GM23248 (cell line): ENCODE measurements at regions of chr18 and their contacts with region 1.

Region 1: GRCh38 chr18:62001396-62001795 is 108.6 kb upstream of the RNF152 start:
- DNase-seq: no peak
- H3K4me3 ChIP-seq: no peak overlapping the region
- H3K27ac ChIP-seq: no peak overlapping the region
- H3K4me1 ChIP-seq: peaks cover 20% of the 10 kb centered on the region
- H3K27me3 ChIP-seq: no peaks in the 10 kb centered on the region

Region 2: GRCh38 chr18:61949946-61950345 is 51.5 kb before region 1 on chr18:
- in situ Hi-C with region 1: loop called (anchors 10 kb)
- DNase-seq: peak; percentile 48
- H3K4me3 ChIP-seq: no peak overlapping the region
- H3K27ac ChIP-seq: no peak overlapping the region
- H3K4me1 ChIP-seq: peaks cover 13% of the 10 kb centered on the region
- H3K27me3 ChIP-seq: no peaks in the 10 kb centered on the region

Region 3: DNA sequence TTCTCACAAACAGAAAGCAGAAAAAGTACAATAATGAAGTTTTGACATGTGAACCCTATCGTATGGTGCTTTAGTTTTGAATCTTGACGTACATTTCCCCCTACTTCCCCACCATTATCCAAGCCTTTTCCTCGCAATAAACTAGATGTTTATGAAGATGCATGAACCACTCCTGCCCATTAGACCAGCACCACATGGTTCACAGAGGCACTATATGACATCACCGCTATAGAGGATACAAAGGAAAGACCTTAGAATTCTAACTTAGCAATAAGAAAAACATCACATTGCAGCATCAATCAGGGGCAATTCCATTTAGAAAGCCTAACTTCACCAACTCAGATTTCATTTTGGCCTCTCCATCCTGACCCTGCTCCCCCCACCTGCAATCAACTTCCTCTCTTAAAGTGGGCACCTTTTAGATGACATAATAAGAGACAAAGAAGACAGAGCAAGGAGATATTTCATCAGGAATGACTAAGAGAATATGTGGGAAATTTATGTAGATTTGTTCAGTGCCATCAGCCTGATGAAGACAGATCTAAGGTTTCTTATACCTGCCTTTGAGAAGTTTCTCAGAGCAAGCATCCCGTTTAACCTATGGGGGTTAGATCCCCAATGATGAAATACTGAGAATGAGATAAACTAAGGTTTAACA is 60.6 kb after region 1 on chr18:
- in situ Hi-C with region 1: no loop called
- DNase-seq: no peak
- H3K4me3 ChIP-seq: no peak overlapping the region
- H3K27ac ChIP-seq: no peak overlapping the region
- H3K4me1 ChIP-seq: no peaks in the 10 kb centered on the region
- H3K27me3 ChIP-seq: no peaks in the 10 kb centered on the region